ENCODE measurements at regions of chr9 and their contacts with region 1.

Region 1: GRCh38 chr9:99130069-99130468 is 25.2 kb downstream of the TGFBR1 start:
- DNase-seq: no peak
- ATAC-seq: no peak
- H3K4me3 ChIP-seq: no peak overlapping the region
- H3K27ac ChIP-seq: no peak overlapping the region
- H3K4me1 ChIP-seq: peaks cover 48 to 50% of the 10 kb centered on the region in 2 donors
- H3K27me3 ChIP-seq: no peaks in the 10 kb centered on the region
- CTCF ChIP-seq: no peak
- POLR2A ChIP-seq: no peak

Region 2: DNA sequence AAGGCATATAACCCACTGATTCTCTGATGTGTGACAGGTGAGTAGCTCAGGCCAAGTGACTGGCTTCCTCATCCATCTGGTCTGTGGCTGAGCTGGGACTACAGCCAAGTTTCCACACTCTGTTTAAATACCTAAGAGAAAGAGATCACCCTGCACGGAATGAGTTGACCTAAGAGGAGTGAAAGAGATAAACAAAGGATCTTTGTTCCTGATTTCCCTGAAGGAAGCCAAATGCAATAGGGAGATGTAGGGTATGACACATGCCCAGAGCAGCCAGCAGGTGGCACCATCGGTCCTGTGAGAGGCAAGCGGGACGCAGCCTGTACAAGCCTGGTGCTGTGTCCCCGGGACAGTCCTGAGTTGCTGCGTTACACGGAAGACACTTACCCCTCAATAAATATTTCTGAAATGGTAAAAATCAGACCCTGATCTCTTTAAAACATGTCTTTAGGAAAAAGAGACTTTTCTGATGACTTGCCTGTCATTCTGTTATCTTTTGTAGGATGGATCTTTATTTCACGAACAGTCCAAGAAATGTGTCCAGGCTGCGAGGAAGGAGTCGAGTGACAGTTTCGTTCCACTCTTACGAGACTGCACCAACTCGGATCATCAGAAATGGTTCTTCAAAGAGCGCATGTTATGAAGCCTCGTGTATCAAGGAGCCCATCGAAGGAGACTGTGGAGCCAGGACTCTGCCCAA is 281.5 kb before region 1 on chr9:
- in situ Hi-C with region 1: loop called in 2 of 4 experiments (anchors 5 to 10 kb)
- intact Hi-C with region 1: no loop called
- DNase-seq: peak; percentile 78 to 82
- ATAC-seq: peak; percentile 97 to 99
- H3K4me3 ChIP-seq: peak overlapping the region; percentile 43 to 49 (median 46)
- H3K27ac ChIP-seq: peak overlapping the region in 2 of 4 donors; percentile 7 to 41
- H3K4me1 ChIP-seq: no peaks in the 10 kb centered on the region
- H3K27me3 ChIP-seq: no peaks in the 10 kb centered on the region
- CTCF ChIP-seq: peak; percentile 70 to 91 (median 76)
- POLR2A ChIP-seq: no peak

Region 3: GRCh38 chr9:98860871-98861293 is 269.2 kb before region 1 on chr9:
- in situ Hi-C with region 1: loop called in 2 of 4 experiments (anchors 5 to 10 kb)
- intact Hi-C with region 1: no loop called
- DNase-seq: peak; percentile 25 to 48
- ATAC-seq: peak; percentile 63 to 70
- H3K4me3 ChIP-seq: no peak overlapping the region
- H3K27ac ChIP-seq: peak overlapping the region in 3 of 4 donors; percentile 11 to 34 (median 33)
- H3K4me1 ChIP-seq: peaks cover 4 to 29% of the 10 kb centered on the region in 2 donors
- H3K27me3 ChIP-seq: no peaks in the 10 kb centered on the region
- CTCF ChIP-seq: peak in 2 of 5 experiments; percentile 43 to 48
- POLR2A ChIP-seq: no peak

Region 4: GRCh38 chr9:99076483-99077171 is 53.4 kb before region 1 on chr9:
- in situ Hi-C with region 1: no loop called
- intact Hi-C with region 1: no loop called
- DNase-seq: no peak
- ATAC-seq: peak in 1 of 2 donors; percentile 30
- H3K4me3 ChIP-seq: no peak overlapping the region
- H3K27ac ChIP-seq: peak overlapping the region in 1 of 4 donors; percentile 13
- H3K4me1 ChIP-seq: no peaks in the 10 kb centered on the region
- H3K27me3 ChIP-seq: no peaks in the 10 kb centered on the region
- CTCF ChIP-seq: no peak
- POLR2A ChIP-seq: no peak